H1 (cell line): ENCODE measurements at regions of chr12 and their contacts with region 1.

Region 1: GRCh38 chr12:51531978-51532497 is 59.0 kb upstream of the SCN8A start:
- DNase-seq: peak; percentile 80 to 90
- H3K4me3 ChIP-seq: peak overlapping the region in 1 of 4 experiments; percentile 38; a peak in 2 of 8 replicates
- H3K27ac ChIP-seq: no peak overlapping the region
- H3K4me1 ChIP-seq: peaks cover 2 to 10% (median 5%) of the 10 kb centered on the region in 4 experiments; a peak in 5 of 7 replicates
- H3K27me3 ChIP-seq: no peaks in the 10 kb centered on the region; a peak in 1 of 7 replicates
- CTCF ChIP-seq: peak; percentile 85 to 98 (median 94)
- EP300 ChIP-seq: no peak
- POLR2A ChIP-seq: no peak
- RAD21 ChIP-seq: peak; percentile 92 to 95

Region 2: DNA sequence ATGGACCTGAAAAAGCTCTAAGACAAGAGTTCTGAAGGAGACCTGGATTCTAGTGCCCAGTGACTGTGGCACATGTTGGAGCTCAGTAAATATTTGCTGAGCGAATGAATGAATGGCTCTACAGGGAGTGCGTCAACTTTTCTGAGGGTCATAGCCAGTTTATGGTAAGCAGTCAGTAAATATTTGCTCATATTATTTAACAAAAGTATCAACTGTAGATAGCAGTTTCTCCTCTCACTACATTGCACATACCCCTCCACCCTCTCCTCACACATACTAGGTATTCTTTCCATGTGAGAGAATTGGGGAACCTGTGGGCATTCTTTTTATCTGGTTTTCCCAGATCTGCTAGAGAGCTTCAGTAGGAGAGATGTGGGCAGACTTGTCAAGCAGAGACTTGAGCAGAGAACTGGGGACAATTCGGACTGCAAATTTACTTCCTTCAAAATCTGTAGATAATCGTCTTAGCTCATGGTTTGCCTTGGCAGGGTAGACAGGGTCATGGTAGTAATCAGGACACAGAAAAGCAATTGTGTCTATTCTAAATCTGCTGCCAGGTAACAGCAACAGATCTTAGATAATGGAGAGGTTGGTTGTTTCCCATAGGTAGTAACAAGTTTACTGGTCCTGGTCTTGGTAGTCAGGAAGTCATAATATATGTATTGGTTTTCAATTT is 101.7 kb before region 1 on chr12:
- CTCF ChIA-PET with region 1: interaction called, 137 read pairs
- POLR2A ChIA-PET with region 1: interaction called, 3 read pairs
- DNase-seq: no peak
- H3K4me3 ChIP-seq: no peak overlapping the region
- H3K27ac ChIP-seq: no peak overlapping the region
- H3K4me1 ChIP-seq: peaks cover 0 to 7% (median 2%) of the 10 kb centered on the region in 4 experiments; a peak in 2 of 7 replicates
- H3K27me3 ChIP-seq: no peaks in the 10 kb centered on the region
- CTCF ChIP-seq: no peak
- EP300 ChIP-seq: no peak
- POLR2A ChIP-seq: no peak
- RAD21 ChIP-seq: no peak

Region 3: GRCh38 chr12:51521554-51522276 is 10.3 kb before region 1 on chr12:
- CTCF ChIA-PET with region 1: interaction called, 132 read pairs
- POLR2A ChIA-PET with region 1: no interaction called
- DNase-seq: no peak
- H3K4me3 ChIP-seq: no peak overlapping the region
- H3K27ac ChIP-seq: no peak overlapping the region
- H3K4me1 ChIP-seq: no peaks in the 10 kb centered on the region
- H3K27me3 ChIP-seq: no peaks in the 10 kb centered on the region; a peak in 1 of 7 replicates
- CTCF ChIP-seq: 0 out of 4 replicates have a peak, but pooled peaks of 1 of the 3 experiments have one; percentile 3
- EP300 ChIP-seq: no peak
- POLR2A ChIP-seq: no peak
- RAD21 ChIP-seq: 0 out of 4 replicates have a peak, but pooled peaks of 1 of the 2 experiments have one; percentile 4

Region 4: DNA sequence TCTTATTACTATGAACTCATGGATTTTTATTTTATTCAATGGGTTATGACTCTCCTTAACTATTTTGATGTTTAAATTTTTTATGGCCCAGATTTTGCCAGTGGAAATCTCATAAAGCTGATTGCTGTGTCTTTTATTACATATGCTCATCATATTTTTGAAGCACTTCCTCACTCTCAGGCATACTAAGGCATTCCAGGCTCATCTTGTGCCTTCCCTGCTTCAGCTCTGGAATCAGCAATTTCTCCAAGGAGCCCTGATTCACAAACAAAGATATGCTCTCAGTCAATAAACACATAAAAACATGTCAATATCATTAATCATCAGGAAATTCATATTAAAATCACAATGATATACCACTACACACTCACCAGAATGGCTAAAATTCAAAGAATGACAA is 14.1 kb after region 1 on chr12:
- CTCF ChIA-PET with region 1: interaction called, 16 read pairs
- POLR2A ChIA-PET with region 1: no interaction called
- DNase-seq: no peak
- H3K4me3 ChIP-seq: no peak overlapping the region
- H3K27ac ChIP-seq: no peak overlapping the region
- H3K4me1 ChIP-seq: peaks cover 2 to 7% (median 4%) of the 10 kb centered on the region in 4 experiments; a peak in 5 of 7 replicates
- H3K27me3 ChIP-seq: no peaks in the 10 kb centered on the region
- CTCF ChIP-seq: no peak
- EP300 ChIP-seq: no peak
- POLR2A ChIP-seq: no peak
- RAD21 ChIP-seq: no peak

Region 5: GRCh38 chr12:51721282-51721940 is 189.4 kb after region 1 on chr12:
- CTCF ChIA-PET with region 1: no interaction called
- POLR2A ChIA-PET with region 1: no interaction called
- DNase-seq: peak; percentile 31 to 87
- H3K4me3 ChIP-seq: peak overlapping the region; percentile 4 to 30 (median 26); a peak in 6 of 8 replicates
- H3K27ac ChIP-seq: no peak overlapping the region
- H3K4me1 ChIP-seq: no peaks in the 10 kb centered on the region; a peak in 1 of 7 replicates
- H3K27me3 ChIP-seq: no peaks in the 10 kb centered on the region
- CTCF ChIP-seq: peak; percentile 24 to 39 (median 31)
- EP300 ChIP-seq: no peak
- POLR2A ChIP-seq: no peak
- RAD21 ChIP-seq: peak in 1 of 2 experiments; percentile 27; a peak in 2 of 4 replicates